ENCODE measurements at regions of chr4 and their contacts with region 1.

Region 1: DNA sequence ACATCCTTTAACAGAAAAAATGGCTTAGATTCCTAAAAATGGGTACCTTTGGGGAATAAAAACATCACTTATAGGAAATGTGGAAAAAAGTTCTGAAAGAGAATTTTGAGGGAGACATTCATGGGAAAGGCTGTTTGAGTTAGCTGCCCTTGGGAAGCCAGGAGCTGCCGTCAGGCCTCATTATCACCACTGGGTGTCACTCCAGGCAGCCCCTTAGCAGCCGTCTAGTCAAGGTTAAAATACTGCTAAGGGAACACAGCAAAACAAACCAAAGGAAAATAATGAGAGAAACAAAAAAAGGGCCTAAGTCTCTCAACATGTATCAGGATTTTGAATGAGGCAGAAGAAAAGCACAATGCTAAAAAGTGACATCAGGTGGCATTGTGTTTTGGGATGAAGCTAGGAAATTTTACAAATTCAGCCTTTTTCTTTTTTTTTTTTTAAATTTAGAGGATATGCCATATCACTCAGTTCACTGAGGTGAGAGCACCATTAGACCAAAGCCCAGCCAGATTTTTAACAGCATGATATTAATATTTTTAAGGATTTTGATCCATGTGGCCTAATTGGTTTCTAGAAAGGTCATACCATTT is 235.3 kb downstream of the GPAT3 start:
- DNase-seq: peak in 4 of 5 donors; percentile 9 to 35 (median 24)
- ATAC-seq: peak in 3 of 4 donors; percentile 52 to 71 (median 61)
- H3K4me3 ChIP-seq: no peak overlapping the region
- H3K27ac ChIP-seq: no peak overlapping the region
- H3K4me1 ChIP-seq: no peaks in the 10 kb centered on the region
- H3K27me3 ChIP-seq: peaks cover 0 to 16% (median 0%) of the 10 kb centered on the region in 9 donors
- CTCF ChIP-seq: peak in 11 of 12 donors; percentile 40 to 62 (median 51)
- POLR2A ChIP-seq: no peak

Region 2: GRCh38 chr4:83846193-83846830 is 75.1 kb after region 1 on chr4:
- intact Hi-C with region 1: loop called in 1 of 10 experiments (anchors 5 kb)
- DNase-seq: peak in 1 of 5 donors; percentile 18
- ATAC-seq: no peak
- H3K4me3 ChIP-seq: no peak overlapping the region
- H3K27ac ChIP-seq: no peak overlapping the region
- H3K4me1 ChIP-seq: no peaks in the 10 kb centered on the region
- H3K27me3 ChIP-seq: peaks cover 0 to 6% (median 0%) of the 10 kb centered on the region in 9 donors
- CTCF ChIP-seq: peak in 2 of 12 donors; percentile 14 to 22
- POLR2A ChIP-seq: no peak

Region 3: GRCh38 chr4:83961575-83961974 is 190.4 kb after region 1 on chr4:
- intact Hi-C with region 1: loop called in 3 of 10 experiments (anchors 5 to 10 kb)
- DNase-seq: no peak
- ATAC-seq: no peak
- H3K4me3 ChIP-seq: no peak overlapping the region
- H3K27ac ChIP-seq: no peak overlapping the region
- H3K4me1 ChIP-seq: no peaks in the 10 kb centered on the region
- H3K27me3 ChIP-seq: peaks cover 0 to 3% (median 0%) of the 10 kb centered on the region in 9 donors
- CTCF ChIP-seq: peak in 1 of 12 donors; percentile 21
- POLR2A ChIP-seq: no peak

Region 4: DNA sequence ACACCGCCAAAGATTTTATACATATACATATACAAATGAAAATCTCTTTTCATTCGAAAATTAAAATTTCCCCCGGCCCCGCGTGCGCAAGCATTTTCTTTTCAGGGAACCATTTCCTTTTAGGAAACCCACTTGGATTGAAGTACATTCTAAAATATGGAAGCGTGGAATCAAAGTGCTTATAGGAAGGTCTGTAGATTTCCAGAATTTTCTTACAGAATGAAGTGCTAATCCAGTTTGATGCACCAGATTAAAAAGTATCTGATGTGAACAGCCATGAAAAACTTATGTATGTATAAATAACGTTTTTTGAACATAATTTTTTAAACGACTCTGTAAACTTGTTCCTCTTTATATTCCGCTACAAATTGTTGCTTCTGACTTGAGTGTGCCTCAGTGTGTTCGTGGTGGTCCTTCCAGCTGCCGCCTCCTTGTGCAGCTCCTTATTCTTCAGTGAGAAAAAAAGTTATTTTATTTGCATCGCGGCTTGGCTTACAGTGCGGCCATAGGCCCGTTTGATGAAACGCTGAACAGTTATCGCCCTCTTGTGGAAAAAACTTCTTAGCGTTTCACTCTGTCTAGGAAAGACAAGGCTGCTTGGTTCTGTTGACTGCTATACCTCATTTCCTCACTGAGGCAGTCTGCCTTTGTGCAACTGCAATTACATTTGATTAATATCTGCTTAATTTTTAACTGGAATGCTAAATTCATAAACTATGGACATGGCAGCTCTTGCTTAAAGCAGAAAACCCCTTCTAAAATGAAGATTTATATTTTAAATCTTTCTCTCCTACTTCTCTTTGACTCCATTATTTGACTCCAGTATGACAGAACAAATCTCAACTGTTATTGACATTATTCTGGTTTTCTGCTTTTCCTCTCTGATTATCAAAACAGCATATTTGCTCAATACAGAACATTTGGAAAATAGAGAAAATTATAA is 732.6 kb after region 1 on chr4:
- intact Hi-C with region 1: loop called in 6 of 10 experiments (anchors 5 to 10 kb)
- DNase-seq: no peak
- ATAC-seq: peak; percentile 61 to 79 (median 78)
- H3K4me3 ChIP-seq: no peak overlapping the region
- H3K27ac ChIP-seq: no peak overlapping the region
- H3K4me1 ChIP-seq: peaks cover 0 to 14% (median 8%) of the 10 kb centered on the region in 12 donors
- H3K27me3 ChIP-seq: peaks cover 48 to 100% (median 91%) of the 10 kb centered on the region in 9 donors
- CTCF ChIP-seq: peak; percentile 36 to 70 (median 54)
- POLR2A ChIP-seq: no peak